ENCODE measurements at regions of chr3 and their contacts with region 1.

Region 1: GRCh38 chr3:54853573-54854404 is 74.1 kb downstream of the LRTM1 start:
- DNase-seq: no peak
- ATAC-seq: peak; percentile 99
- H3K4me3 ChIP-seq: no peak overlapping the region
- H3K27ac ChIP-seq: no peak overlapping the region
- H3K4me1 ChIP-seq: no peaks in the 10 kb centered on the region
- H3K27me3 ChIP-seq: no peaks in the 10 kb centered on the region
- CTCF ChIP-seq: peak; percentile 89

Region 2: DNA sequence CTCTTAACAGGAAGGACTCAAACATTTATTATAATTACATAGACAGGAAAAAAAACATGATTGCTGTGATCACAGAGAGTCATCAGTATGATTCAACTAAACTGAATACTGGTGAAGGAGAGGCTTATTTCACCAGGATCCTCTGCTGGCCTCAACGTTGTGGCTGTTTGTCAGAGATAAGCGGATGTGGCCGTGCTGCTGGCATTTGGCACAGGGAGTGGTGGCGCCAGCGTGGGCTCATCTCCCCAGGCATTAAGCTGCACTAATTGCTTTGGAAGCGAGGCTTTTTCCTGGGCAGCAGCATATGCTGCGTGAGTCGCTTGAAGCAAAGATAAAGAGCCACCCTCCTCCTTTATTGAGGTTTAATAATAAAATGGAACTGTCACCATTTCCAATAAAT is 232.6 kb before region 1 on chr3:
- CTCF ChIA-PET with region 1: no interaction called
- POLR2A ChIA-PET with region 1: no interaction called
- in situ Hi-C with region 1: no loop called
- intact Hi-C with region 1: no loop called
- DNase-seq: no peak
- ATAC-seq: no peak
- H3K4me3 ChIP-seq: no peak overlapping the region
- H3K27ac ChIP-seq: no peak overlapping the region
- H3K4me1 ChIP-seq: no peaks in the 10 kb centered on the region
- H3K27me3 ChIP-seq: no peaks in the 10 kb centered on the region
- CTCF ChIP-seq: no peak

Region 3: DNA sequence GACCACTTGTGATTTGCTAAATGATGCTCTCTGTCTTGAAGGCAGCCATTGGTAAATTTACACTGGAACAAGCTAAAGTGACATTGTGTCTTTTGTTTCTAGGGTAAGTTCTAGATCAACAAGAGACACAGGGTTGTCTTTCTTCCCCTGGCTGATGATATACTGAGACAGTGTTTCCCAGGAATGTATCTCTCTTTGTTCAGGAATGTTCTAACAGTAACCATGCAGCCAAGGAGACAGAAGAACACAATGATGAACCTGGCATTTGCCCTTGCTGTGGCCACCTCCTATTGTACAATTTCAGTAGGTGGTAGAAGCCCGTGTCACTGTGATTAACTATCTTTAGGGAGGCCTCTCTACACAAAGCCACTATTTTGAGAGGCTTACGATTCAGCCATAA is 56.7 kb before region 1 on chr3:
- CTCF ChIA-PET with region 1: no interaction called
- POLR2A ChIA-PET with region 1: no interaction called
- in situ Hi-C with region 1: no loop called
- intact Hi-C with region 1: no loop called
- DNase-seq: no peak
- ATAC-seq: no peak
- H3K4me3 ChIP-seq: no peak overlapping the region
- H3K27ac ChIP-seq: no peak overlapping the region
- H3K4me1 ChIP-seq: no peaks in the 10 kb centered on the region
- H3K27me3 ChIP-seq: no peaks in the 10 kb centered on the region
- CTCF ChIP-seq: no peak

Region 4: GRCh38 chr3:54870423-54870822 is 16.6 kb after region 1 on chr3:
- CTCF ChIA-PET with region 1: no interaction called
- POLR2A ChIA-PET with region 1: no interaction called
- in situ Hi-C with region 1: no loop called
- intact Hi-C with region 1: no loop called
- DNase-seq: no peak
- ATAC-seq: peak; percentile 84
- H3K4me3 ChIP-seq: no peak overlapping the region
- H3K27ac ChIP-seq: peak overlapping the region; percentile 57; the same call in 1 of the 2 replicates
- H3K4me1 ChIP-seq: no peaks in the 10 kb centered on the region
- H3K27me3 ChIP-seq: no peaks in the 10 kb centered on the region
- CTCF ChIP-seq: peak; percentile 56

Region 5: GRCh38 chr3:55013145-55013925 is 159.5 kb after region 1 on chr3:
- CTCF ChIA-PET with region 1: no interaction called
- POLR2A ChIA-PET with region 1: no interaction called
- in situ Hi-C with region 1: no loop called
- intact Hi-C with region 1: loop called (anchors 10 kb)
- DNase-seq: no peak
- ATAC-seq: no peak
- H3K4me3 ChIP-seq: no peak overlapping the region
- H3K27ac ChIP-seq: no peak overlapping the region
- H3K4me1 ChIP-seq: no peaks in the 10 kb centered on the region
- H3K27me3 ChIP-seq: no peaks in the 10 kb centered on the region
- CTCF ChIP-seq: peak; percentile 11; the same call in 1 of the 2 replicates

Region 6: DNA sequence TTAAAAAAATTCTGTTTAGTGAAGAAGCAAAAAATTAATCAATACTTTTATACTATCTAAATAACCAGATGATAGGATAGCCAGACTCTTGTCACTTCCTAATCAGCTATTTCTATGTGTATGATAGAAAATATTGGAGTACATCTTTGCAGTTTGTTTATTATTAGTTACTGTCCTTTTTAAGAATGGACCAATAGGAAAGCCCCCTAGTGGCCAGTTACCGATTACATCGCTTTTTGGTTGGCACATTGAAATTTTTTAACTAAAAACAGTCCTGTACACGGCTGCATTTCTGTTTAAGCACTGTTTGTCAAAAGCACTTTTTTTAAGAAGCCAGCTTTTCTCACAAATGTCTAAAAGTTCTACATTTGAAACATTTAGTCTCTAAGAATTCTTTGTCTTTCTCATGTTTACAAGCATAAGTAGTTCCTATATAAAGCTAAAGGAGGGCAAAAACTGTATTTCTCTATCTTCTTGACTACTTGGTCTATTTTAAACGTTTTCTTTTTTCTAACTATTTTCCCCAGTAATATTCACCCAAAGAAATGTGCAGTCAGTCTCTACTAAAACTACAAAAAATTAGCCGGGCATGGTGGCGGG is 327.2 kb after region 1 on chr3:
- CTCF ChIA-PET with region 1: no interaction called
- POLR2A ChIA-PET with region 1: no interaction called
- in situ Hi-C with region 1: no loop called
- intact Hi-C with region 1: loop called (anchors 5 kb)
- DNase-seq: no peak
- ATAC-seq: no peak
- H3K4me3 ChIP-seq: no peak overlapping the region
- H3K27ac ChIP-seq: no peak overlapping the region
- H3K4me1 ChIP-seq: no peaks in the 10 kb centered on the region
- H3K27me3 ChIP-seq: no peaks in the 10 kb centered on the region
- CTCF ChIP-seq: peak; percentile 68; the same call in 1 of the 2 replicates

Region 7: DNA sequence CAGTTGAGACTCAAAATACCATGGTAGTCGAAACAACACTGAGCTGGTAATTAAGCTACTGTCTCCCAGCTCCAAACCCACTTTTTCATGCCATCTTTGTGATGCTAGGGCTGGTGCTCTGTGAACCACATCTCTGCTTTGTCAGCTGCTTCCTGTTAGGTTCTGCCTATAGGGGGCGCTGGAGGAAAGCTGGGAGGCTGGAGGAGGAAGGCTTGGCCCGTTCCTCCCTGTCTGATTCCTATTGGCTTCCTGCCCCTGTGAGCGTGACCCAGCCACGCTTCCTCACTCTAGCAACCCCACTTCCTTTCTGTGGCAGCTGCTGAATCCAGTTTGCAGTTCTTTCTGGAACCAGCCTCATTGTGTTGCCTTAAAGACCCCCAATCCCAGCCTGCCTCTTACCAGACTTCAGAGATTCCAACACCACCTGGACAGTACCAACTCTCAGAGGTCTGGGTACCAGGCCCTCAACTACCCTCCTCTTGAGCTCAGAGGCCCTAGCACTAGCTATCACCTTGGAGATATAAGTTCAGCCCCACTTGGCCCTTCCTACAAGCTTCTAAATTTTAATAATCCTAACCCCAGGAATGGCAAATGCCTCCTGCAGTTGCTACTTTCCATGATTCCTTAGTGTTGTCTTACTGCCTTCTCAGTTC is 1493.6 kb after region 1 on chr3:
- CTCF ChIA-PET with region 1: no interaction called
- POLR2A ChIA-PET with region 1: no interaction called
- in situ Hi-C with region 1: no loop called
- intact Hi-C with region 1: no loop called
- DNase-seq: no peak
- ATAC-seq: no peak
- H3K4me3 ChIP-seq: no peak overlapping the region
- H3K27ac ChIP-seq: no peak overlapping the region
- H3K4me1 ChIP-seq: no peaks in the 10 kb centered on the region
- H3K27me3 ChIP-seq: no peaks in the 10 kb centered on the region
- CTCF ChIP-seq: peak; percentile 32